AG04449 (cell line): ENCODE measurements at regions of chr18 and their contacts with region 1.

Region 1: DNA sequence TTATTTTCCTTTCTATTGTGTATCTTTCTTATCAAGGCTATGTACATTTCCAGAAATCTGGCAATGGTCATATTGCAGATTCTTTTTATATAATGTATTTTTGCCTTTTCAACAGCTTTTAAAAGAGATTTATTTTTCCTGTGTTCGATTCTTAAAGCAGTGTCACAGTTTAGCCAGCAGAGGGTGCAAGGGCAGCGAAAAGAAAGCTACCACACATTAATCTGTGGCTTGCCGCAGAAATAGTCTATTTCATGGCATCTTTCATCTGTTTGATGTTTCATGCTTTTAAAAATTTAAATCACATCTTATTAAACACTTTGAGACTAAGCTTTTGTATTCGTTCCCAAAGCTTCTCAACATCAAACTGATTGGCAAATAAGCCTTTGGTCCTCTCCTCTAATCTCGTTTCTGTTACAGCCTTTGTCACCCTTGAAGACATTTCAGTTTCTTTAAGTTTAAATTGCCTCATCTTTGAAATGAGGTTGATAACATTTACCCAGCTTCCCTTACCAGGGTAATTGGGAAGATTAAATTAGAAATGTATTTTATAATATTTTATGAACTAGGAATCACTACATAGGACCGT is 73.3 kb downstream of the PIK3C3 start:
- DNase-seq: no peak
- H3K4me3 ChIP-seq: no peak overlapping the region
- CTCF ChIP-seq: peak; percentile 78

Region 2: DNA sequence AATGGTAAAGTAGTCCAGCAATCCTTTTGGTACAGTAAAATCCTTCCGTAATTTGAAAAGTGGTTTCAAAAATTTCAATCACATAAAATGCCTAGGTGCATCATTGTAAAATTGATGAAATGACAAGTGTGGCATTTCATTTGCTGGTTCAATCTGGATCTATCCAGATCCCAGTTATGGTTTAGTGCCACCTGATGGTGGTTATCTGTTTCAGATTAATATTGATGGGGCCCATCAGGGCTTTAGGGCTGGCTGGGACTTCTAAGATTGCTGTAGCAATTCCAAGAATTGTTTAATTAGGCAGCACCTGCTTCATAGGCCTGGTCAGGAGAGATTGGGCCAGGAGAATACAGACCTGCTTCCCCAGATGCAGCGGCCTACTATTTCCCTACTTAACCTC is 128.8 kb before region 1 on chr18:
- CTCF ChIA-PET with region 1: no interaction called
- POLR2A ChIA-PET with region 1: no interaction called
- DNase-seq: no peak
- H3K4me3 ChIP-seq: no peak overlapping the region
- CTCF ChIP-seq: no peak

Region 3: DNA sequence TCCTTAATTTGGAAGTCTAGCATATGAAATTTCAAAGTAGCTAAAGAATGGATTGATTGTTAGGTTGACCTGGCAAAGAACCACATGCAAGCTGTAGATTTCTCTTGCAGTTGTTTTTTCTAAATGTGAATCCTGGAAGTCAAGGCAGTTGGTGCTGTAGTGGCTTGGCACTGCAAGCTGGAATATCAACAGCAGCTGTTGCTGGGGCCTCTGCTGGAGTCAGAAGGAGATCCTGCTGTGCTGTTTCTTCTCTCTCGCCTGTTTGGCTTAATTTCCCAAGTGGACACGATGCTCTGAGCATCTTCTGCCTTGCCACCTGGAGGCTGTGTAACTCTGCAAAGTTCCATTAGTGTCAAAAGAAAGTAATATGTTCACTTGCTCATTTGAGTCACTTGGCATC is 60.7 kb before region 1 on chr18:
- CTCF ChIA-PET with region 1: interaction called, 11 read pairs
- POLR2A ChIA-PET with region 1: no interaction called
- DNase-seq: no peak
- H3K4me3 ChIP-seq: no peak overlapping the region
- CTCF ChIP-seq: no peak

Region 4: GRCh38 chr18:41985914-41986313 is 42.4 kb before region 1 on chr18:
- CTCF ChIA-PET with region 1: interaction called, 16 read pairs
- POLR2A ChIA-PET with region 1: no interaction called
- DNase-seq: no peak
- H3K4me3 ChIP-seq: no peak overlapping the region
- CTCF ChIP-seq: no peak

Region 5: DNA sequence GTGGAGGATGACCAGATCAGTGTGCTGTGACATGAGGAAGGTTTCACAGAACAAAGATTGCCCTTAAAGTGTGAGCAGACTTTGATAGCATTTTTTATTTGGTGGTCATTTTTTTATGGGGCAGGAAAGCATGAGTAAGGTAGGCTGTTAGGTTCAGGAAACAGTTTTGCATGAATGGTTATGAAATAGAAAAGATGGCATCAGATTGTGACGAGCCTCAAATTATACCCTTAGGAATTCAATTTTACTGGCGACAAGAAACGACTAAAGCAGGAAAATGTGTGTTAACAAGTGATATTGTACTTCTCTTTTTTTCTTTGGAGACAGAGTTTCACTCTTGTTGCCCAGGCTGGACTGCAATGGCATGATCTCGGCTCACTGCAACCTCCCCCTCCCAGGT is 28.6 kb before region 1 on chr18:
- CTCF ChIA-PET with region 1: interaction called, 17 read pairs
- POLR2A ChIA-PET with region 1: no interaction called
- DNase-seq: no peak
- H3K4me3 ChIP-seq: no peak overlapping the region
- CTCF ChIP-seq: no peak

Region 6: GRCh38 chr18:42011053-42011452 is 17.3 kb before region 1 on chr18:
- CTCF ChIA-PET with region 1: interaction called, 209 read pairs
- POLR2A ChIA-PET with region 1: no interaction called
- DNase-seq: no peak
- H3K4me3 ChIP-seq: no peak overlapping the region
- CTCF ChIP-seq: no peak

Region 7: DNA sequence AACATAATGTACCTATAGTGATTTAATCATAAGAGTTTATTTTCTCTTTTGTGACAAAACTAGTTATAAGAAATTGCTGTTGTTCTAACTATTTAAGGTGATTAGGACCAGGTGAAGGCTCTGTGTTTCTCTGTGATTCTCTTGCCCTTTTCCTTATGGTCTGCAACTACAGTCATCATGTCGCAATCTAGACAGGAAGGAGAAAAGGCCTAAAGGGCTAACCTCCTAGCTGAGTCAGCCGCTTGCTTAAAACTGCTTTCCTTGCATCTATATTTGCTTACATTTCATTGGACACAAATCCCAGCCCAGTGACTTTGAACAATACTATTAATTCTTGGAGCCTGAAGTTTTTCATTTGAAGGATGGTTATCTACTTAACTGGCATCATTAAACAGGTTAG is 19.8 kb after region 1 on chr18:
- CTCF ChIA-PET with region 1: interaction called, 52 read pairs
- POLR2A ChIA-PET with region 1: no interaction called
- DNase-seq: peak; percentile 58
- H3K4me3 ChIP-seq: no peak overlapping the region
- CTCF ChIP-seq: no peak